AG04450 (cell line): ENCODE measurements at regions of chr19 and their contacts with region 1.

Region 1: DNA sequence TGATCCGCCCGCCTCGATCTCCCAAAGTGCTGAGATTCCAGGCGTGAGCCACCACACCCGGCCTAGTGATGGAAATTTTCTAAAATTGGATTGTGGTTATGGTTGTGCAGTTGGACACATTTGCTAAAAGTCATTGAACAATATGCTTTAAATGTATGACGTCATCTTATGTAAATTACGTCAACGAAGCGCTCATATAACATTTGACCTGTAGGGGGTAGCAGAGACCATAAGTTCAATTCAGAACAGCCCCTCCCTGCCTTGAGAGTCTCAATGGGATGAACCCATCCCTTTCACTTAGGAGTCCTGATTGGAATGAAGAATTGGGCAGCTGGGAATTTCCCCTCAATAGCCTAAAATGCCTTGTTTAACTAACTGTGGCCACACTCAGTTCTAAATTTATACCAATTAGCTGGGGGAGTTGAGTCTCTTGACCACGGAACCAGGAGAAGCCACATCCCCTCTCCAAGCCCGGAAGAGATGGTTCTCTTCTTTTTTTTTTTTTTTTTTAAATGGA is 15.3 kb upstream of the TLE6 start:
- DNase-seq: peak; percentile 66
- H3K4me3 ChIP-seq: no peak overlapping the region
- H3K27ac ChIP-seq: no peak overlapping the region
- H3K27me3 ChIP-seq: no peaks in the 10 kb centered on the region
- CTCF ChIP-seq: peak; percentile 68

Region 2: GRCh38 chr19:2867025-2867991 is 94.8 kb before region 1 on chr19 and contains the start of gene ZNF556:
- CTCF ChIA-PET with region 1: no interaction called
- POLR2A ChIA-PET with region 1: no interaction called
- DNase-seq: no peak
- H3K4me3 ChIP-seq: no peak within 1 kb of the TSS
- H3K27ac ChIP-seq: no peak within 1 kb of the TSS
- H3K27me3 ChIP-seq: peaks cover 3% of the 10 kb centered on the region
- CTCF ChIP-seq: no peak
- polyA plus RNA-seq, gene ZNF556: not detected in 2 replicates

Region 3: DNA sequence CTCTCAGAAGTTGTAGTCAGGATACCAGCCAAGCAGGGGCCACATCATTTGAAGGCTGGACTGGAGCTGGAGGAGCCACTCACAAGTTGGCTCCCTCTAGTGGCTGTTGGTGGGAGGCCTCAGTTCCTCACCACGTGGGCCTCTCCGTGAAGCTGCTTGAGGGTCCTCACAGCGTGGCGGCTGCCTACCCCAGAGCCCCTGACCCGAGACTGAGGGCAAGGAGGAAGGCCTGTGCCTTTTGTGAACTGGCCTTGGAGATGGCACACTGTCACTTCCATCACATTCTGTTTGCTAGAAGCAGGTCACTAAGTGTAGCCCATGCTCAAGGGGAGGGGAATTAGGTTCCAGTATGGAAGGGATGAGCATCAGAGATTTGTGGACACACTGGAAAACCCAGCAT is 146.7 kb after region 1 on chr19:
- CTCF ChIA-PET with region 1: interaction called, 32 read pairs
- POLR2A ChIA-PET with region 1: no interaction called
- DNase-seq: peak; percentile 18
- H3K4me3 ChIP-seq: no peak overlapping the region
- H3K27ac ChIP-seq: no peak overlapping the region
- H3K27me3 ChIP-seq: no peaks in the 10 kb centered on the region
- CTCF ChIP-seq: peak; percentile 85

Region 4: DNA sequence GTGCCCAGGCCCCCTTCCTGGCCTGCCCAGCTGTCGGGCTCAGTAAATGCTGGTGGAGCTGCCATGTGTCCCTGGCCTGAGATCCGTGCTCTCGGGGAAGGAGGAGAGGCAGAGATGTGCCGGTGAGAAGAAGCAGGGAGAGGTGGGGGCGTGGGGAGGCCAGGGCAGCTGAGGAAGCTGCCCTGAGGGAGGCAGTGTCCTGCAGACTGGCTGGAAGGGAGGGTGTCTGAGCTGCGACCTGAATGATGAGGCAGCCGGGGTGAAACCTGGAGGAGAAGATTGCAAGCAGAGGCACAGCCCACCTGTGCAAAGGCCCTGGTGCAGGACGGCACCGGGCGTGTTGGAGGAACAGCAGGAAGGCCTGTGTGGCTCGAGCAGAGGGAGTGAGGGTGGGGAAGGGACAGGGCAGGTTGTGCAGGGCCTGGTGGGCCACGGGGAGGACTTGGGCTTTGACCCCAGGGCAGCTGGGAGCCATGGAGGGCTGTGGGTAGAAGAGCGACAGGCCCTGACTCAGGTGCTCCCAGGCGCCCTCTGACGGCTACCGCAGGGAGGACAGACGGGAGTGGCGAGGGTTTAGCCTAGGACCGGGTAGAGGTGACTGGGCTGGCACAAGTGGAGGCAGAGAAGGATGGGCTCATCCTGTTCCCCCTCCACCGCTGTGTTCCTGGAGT is 248.4 kb after region 1 on chr19:
- CTCF ChIA-PET with region 1: interaction called, 10 read pairs
- POLR2A ChIA-PET with region 1: no interaction called
- DNase-seq: no peak
- H3K4me3 ChIP-seq: no peak overlapping the region
- H3K27ac ChIP-seq: no peak overlapping the region
- H3K27me3 ChIP-seq: no peaks in the 10 kb centered on the region
- CTCF ChIP-seq: peak; percentile 70